ENCODE measurements at regions of chr18 and their contacts with region 1.

Region 1: GRCh38 chr18:839224-840022 is 27.4 kb upstream of the YES1 start:
- DNase-seq: peak; percentile 90
- H3K4me3 ChIP-seq: no peak overlapping the region
- H3K27ac ChIP-seq: no peak overlapping the region
- H3K4me1 ChIP-seq: no peaks in the 10 kb centered on the region
- H3K27me3 ChIP-seq: no peaks in the 10 kb centered on the region
- CTCF ChIP-seq: peak; percentile 98

Region 2: DNA sequence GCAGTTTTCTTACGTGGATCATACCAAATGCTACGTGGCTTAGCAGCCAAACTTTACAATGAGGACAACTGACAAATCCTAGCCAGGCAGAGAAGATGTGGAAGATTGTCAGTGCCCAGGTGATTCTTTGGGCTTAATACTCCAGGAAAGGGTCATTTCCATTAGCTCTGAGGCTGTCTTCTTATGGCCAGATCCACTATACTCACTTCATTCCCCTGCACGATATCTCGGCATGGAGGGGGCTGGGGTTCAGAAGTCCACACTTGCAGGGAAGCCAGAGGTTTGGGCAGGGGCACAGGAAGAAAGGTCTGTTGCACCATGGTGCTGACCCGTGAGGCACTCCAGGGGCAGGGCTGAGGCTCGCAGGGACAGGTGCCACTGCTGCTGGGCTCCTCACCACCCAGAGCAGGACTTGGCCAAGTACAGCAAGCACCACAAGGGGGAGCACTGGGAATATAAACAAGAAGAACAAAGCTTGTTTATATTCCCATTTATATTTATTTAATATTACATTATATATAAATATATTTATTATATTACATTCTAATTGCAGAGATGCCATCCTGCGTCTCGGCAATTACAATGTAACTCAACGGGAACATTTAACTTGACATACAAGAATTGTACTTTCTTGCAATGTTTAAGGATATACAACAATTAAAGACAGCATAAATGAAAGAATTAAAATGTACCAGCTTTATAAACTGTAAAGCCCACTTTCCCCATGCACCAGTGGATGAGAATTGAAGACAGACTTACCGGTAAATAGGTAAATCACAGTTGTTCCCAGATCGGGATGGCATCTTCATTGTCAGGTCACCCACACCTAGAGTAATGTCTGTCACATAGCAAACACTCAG is 215.4 kb before region 1 on chr18:
- intact Hi-C with region 1: loop called (anchors 5 kb)
- DNase-seq: peak; percentile 75
- H3K4me3 ChIP-seq: no peak overlapping the region
- H3K27ac ChIP-seq: no peak overlapping the region
- H3K4me1 ChIP-seq: no peaks in the 10 kb centered on the region
- H3K27me3 ChIP-seq: no peaks in the 10 kb centered on the region
- CTCF ChIP-seq: peak; percentile 72